Mammary epithelial cell (primary cell): ENCODE measurements at regions of chr1 and their contacts with region 1.

Region 1: GRCh38 chr1:195939844-195940243 is 668.4 kb downstream of the KCNT2 start:
- DNase-seq: peak; percentile 34
- H3K4me3 ChIP-seq: no peak overlapping the region
- H3K27ac ChIP-seq: no peak overlapping the region
- H3K4me1 ChIP-seq: no peaks in the 10 kb centered on the region
- H3K27me3 ChIP-seq: no peaks in the 10 kb centered on the region
- CTCF ChIP-seq: peak; percentile 51 to 74

Region 2: GRCh38 chr1:195831789-195832188 is 108.1 kb before region 1 on chr1:
- CTCF ChIA-PET with region 1: no interaction called
- dilution Hi-C with region 1: no loop called
- in situ Hi-C with region 1: no loop called
- intact Hi-C with region 1: no loop called
- DNase-seq: no peak
- H3K4me3 ChIP-seq: no peak overlapping the region
- H3K27ac ChIP-seq: no peak overlapping the region
- H3K4me1 ChIP-seq: no peaks in the 10 kb centered on the region
- H3K27me3 ChIP-seq: no peaks in the 10 kb centered on the region
- CTCF ChIP-seq: no peak

Region 3: GRCh38 chr1:195872376-195872775 is 67.5 kb before region 1 on chr1:
- CTCF ChIA-PET with region 1: no interaction called
- dilution Hi-C with region 1: no loop called
- in situ Hi-C with region 1: no loop called
- intact Hi-C with region 1: no loop called
- DNase-seq: no peak
- H3K4me3 ChIP-seq: no peak overlapping the region
- H3K27ac ChIP-seq: no peak overlapping the region
- H3K4me1 ChIP-seq: no peaks in the 10 kb centered on the region
- H3K27me3 ChIP-seq: no peaks in the 10 kb centered on the region
- CTCF ChIP-seq: no peak

Region 4: DNA sequence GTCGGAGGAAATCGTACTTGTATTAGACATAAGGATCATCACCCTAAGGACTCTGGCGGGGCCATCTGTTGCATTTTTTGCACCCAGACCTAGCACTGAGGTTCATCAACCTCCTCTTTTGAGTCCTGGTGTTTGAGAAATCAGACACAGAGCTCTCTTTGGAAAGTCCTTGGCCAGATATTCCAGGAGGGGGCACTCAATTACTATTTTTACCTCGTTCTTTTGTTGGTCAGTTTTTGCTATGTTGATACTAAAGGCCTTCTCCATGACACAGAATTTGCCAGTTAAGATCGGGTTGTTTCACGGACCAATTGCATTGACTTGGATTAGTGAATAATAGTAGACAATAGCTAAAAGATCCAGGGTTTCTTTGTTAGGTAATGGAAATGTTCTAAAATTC is 42.8 kb before region 1 on chr1:
- CTCF ChIA-PET with region 1: no interaction called
- dilution Hi-C with region 1: no loop called
- in situ Hi-C with region 1: no loop called
- intact Hi-C with region 1: loop called (anchors 1 kb)
- DNase-seq: peak; percentile 18
- H3K4me3 ChIP-seq: no peak overlapping the region
- H3K27ac ChIP-seq: no peak overlapping the region
- H3K4me1 ChIP-seq: peaks cover 19% of the 10 kb centered on the region
- H3K27me3 ChIP-seq: no peaks in the 10 kb centered on the region
- CTCF ChIP-seq: peak; percentile 20 to 34

Region 5: GRCh38 chr1:196029410-196029809 is 89.6 kb after region 1 on chr1:
- CTCF ChIA-PET with region 1: interaction called, 4 read pairs
- dilution Hi-C with region 1: no loop called
- in situ Hi-C with region 1: no loop called
- intact Hi-C with region 1: loop called (anchors 1 kb)
- DNase-seq: no peak
- H3K4me3 ChIP-seq: no peak overlapping the region
- H3K27ac ChIP-seq: no peak overlapping the region
- H3K4me1 ChIP-seq: no peaks in the 10 kb centered on the region
- H3K27me3 ChIP-seq: no peaks in the 10 kb centered on the region
- CTCF ChIP-seq: peak in 1 of 2 donors; percentile 45

Region 6: DNA sequence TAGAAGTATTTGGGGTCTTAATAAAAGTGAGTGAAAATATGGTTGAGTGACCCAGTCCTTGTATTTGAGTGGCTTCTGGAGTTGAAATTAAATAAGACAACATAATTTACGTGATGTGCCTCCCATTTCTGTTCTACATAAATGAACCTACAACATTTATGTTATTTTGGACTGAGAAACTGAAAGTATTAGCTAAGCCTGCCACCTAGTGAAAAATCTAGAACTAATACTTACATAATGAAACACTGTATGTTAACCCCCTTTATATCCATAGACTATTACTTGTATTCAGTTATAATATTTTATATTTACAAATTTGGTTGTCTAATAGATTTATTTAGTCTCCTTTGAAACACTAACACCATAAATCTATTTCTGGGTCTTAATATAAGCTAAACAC is 369.5 kb after region 1 on chr1:
- CTCF ChIA-PET with region 1: no interaction called
- dilution Hi-C with region 1: no loop called
- in situ Hi-C with region 1: loop called (anchors 10 to 25 kb)
- intact Hi-C with region 1: loop called (anchors 1 kb)
- DNase-seq: peak; percentile 21
- H3K4me3 ChIP-seq: no peak overlapping the region
- H3K27ac ChIP-seq: no peak overlapping the region
- H3K4me1 ChIP-seq: no peaks in the 10 kb centered on the region
- H3K27me3 ChIP-seq: no peaks in the 10 kb centered on the region
- CTCF ChIP-seq: peak; percentile 14 to 43

Region 7: DNA sequence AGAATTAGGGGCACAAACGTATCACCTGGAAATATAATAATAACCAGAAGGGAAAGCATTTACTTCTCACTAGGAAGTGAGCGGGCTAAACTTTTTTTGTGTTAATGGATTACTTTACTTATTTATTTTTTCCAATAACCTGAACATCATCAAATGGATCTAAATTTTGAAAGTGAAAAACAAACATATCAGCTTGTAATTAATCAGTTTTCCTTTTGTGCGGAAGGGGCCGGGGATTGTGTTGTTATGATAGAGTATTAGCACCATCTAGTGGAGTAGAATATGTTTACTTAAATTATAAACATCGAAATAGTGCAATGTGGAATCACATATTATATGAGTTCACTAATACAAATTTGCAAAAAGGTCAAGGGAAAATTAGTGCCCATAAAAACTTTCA is 721.0 kb after region 1 on chr1:
- CTCF ChIA-PET with region 1: no interaction called
- dilution Hi-C with region 1: no loop called
- in situ Hi-C with region 1: no loop called
- intact Hi-C with region 1: loop called (anchors 5 kb)
- DNase-seq: peak; percentile 8
- H3K4me3 ChIP-seq: no peak overlapping the region
- H3K27ac ChIP-seq: no peak overlapping the region
- H3K4me1 ChIP-seq: no peaks in the 10 kb centered on the region
- H3K27me3 ChIP-seq: no peaks in the 10 kb centered on the region
- CTCF ChIP-seq: peak; percentile 27 to 45